Pancreas (tissue), 10 donors: ENCODE measurements at regions of chr1 and their contacts with region 1.

Region 1: DNA sequence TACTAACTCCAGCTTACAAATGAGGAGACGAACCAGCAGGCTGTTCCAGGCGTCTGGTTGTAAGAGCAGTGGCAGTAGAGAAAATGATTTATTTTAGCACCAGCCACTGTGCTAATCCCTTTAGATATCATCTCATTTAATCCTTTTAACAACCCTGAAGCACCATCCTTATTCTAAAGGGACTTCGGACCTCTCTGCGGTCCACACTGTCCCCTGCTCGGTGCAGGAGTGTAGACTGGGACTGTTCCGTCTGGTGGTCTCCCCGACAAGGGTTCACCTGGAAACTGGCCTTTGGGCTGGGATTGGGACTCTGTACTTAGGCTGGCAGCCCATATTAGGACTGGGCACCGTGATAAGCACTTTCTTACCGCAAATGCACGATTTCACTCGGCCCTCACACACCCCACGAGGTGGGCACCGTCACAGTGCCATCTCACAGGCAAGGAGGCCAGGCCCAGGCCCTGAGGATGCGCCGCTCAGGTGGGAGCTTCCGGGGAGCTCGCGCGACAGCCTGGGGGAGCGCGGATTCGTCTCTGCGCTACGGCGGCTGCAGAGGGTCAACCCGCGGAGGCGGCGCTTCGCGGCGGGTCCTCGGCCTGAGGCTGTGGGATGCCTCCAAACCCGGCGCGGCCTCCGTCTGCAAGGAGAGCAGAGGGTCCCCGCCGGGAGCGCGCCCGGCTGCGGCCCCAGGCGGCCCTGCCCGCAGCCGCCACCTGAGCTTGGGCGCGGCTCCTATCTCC is 45.2 kb downstream of the ATP1A1 start:
- DNase-seq: peak; percentile 77 to 93 (median 82)
- ATAC-seq: peak; percentile 88 to 95 (median 91)
- H3K4me3 ChIP-seq: peak overlapping the region; percentile 46 to 74 (median 59)
- H3K27ac ChIP-seq: peak overlapping the region; percentile 43 to 72 (median 48)
- H3K4me1 ChIP-seq: peaks cover 2 to 20% (median 16%) of the 10 kb centered on the region in 3 donors
- H3K27me3 ChIP-seq: no peaks in the 10 kb centered on the region
- CTCF ChIP-seq: no peak

Region 2: GRCh38 chr1:116076831-116077230 is 341.4 kb before region 1 on chr1:
- intact Hi-C with region 1: no loop called
- DNase-seq: no peak
- ATAC-seq: no peak
- H3K4me3 ChIP-seq: no peak overlapping the region
- H3K27ac ChIP-seq: no peak overlapping the region
- H3K4me1 ChIP-seq: no peaks in the 10 kb centered on the region
- H3K27me3 ChIP-seq: no peaks in the 10 kb centered on the region
- CTCF ChIP-seq: no peak

Region 3: GRCh38 chr1:116268204-116268603 is 150.1 kb before region 1 on chr1:
- intact Hi-C with region 1: no loop called
- DNase-seq: peak in 5 of 6 donors; percentile 18 to 76 (median 57)
- ATAC-seq: peak in 3 of 4 donors; percentile 56 to 71 (median 67)
- H3K4me3 ChIP-seq: no peak overlapping the region
- H3K27ac ChIP-seq: no peak overlapping the region
- H3K4me1 ChIP-seq: no peaks in the 10 kb centered on the region
- H3K27me3 ChIP-seq: no peaks in the 10 kb centered on the region
- CTCF ChIP-seq: no peak

Region 4: GRCh38 chr1:116472431-116472961 is 54.2 kb after region 1 on chr1:
- intact Hi-C with region 1: loop called in 2 of 3 experiments (anchors 10 kb)
- DNase-seq: no peak
- ATAC-seq: peak in 1 of 4 donors; percentile 19
- H3K4me3 ChIP-seq: no peak overlapping the region
- H3K27ac ChIP-seq: peak overlapping the region in 1 of 4 donors; percentile 16
- H3K4me1 ChIP-seq: peaks cover 23 to 35% (median 26%) of the 10 kb centered on the region in 3 donors
- H3K27me3 ChIP-seq: no peaks in the 10 kb centered on the region
- CTCF ChIP-seq: no peak